ENCODE measurements at regions of chr12 and their contacts with region 1.

Region 1: DNA sequence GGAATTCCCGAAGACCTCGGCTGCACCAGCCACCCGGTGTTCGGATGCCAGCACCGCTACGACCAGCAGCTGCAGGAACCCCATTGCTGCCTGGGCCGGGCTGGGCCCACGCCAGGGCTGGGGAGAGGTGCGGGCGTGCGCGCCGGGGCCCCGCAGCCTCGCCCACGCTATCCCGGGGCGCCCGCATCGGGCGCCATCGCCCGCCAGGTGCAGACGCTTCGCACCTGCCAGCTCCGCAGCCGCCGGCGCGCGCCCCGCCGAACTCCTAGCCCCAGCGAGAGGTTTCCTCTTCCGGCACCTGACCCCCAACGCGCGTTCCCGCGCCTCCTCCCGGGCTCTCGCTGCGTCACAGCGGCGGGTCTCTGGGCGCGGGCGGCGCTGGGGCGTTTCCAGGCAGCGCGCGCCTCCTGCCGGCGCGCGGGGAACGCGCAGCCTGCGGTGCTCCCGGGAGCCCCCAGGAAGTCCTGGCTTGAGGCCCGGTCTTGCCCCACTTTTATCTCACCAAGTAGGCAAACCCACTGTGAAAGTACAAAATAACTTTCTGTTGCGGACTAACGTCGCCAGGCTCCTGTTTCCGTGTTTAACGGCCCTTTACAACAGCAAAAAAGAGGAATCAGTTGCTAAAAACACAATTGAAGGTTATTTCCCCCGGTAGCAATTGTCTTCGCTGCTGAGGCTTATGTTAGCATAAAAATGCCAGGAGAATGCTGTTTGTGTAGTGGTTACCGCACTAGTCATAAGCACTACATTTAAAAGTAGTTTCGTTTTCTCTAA is at the start of gene TM7SF3:
- DNase-seq: peak; percentile 91 to 99 (median 96)
- ATAC-seq: peak; percentile 82
- H3K4me3 ChIP-seq: peak within 1 kb of the TSS; percentile 89
- H3K4me3 Mint-ChIP-seq: peak within 1 kb of the TSS; percentile 93
- H3K27ac ChIP-seq: peak within 1 kb of the TSS; percentile 92 to 96
- H3K27ac Mint-ChIP-seq: peak within 1 kb of the TSS; percentile 97
- H3K4me1 ChIP-seq: peaks cover 25% of the 10 kb centered on the region
- H3K4me1 Mint-ChIP-seq: peaks cover 57% of the 10 kb centered on the region
- H3K27me3 ChIP-seq: no peaks in the 10 kb centered on the region
- H3K27me3 Mint-ChIP-seq: no peaks in the 10 kb centered on the region
- CTCF ChIP-seq: peak; percentile 99
- total RNA-seq, gene TM7SF3: 8.3 to 9.5 TPM

Region 2: GRCh38 chr12:26701604-26702215 is 312.6 kb before region 1 on chr12:
- CTCF ChIA-PET with region 1: no interaction called
- POLR2A ChIA-PET with region 1: no interaction called
- intact Hi-C with region 1: no loop called
- DNase-seq: peak in 3 of 14 experiments; percentile 40 to 48 (median 44)
- ATAC-seq: no peak
- H3K4me3 ChIP-seq: no peak overlapping the region
- H3K4me3 Mint-ChIP-seq: no peak overlapping the region
- H3K27ac ChIP-seq: no peak overlapping the region
- H3K27ac Mint-ChIP-seq: no peak overlapping the region
- H3K4me1 ChIP-seq: no peaks in the 10 kb centered on the region
- H3K4me1 Mint-ChIP-seq: no peaks in the 10 kb centered on the region
- H3K27me3 ChIP-seq: no peaks in the 10 kb centered on the region
- H3K27me3 Mint-ChIP-seq: no peaks in the 10 kb centered on the region
- CTCF ChIP-seq: peak; percentile 61

Region 3: GRCh38 chr12:26853303-26854030 is 160.8 kb before region 1 on chr12:
- CTCF ChIA-PET with region 1: no interaction called
- POLR2A ChIA-PET with region 1: interaction called, 4 read pairs
- intact Hi-C with region 1: loop called (anchors 1 to 2 kb)
- DNase-seq: peak; percentile 56 to 84 (median 63)
- ATAC-seq: peak; percentile 99
- H3K4me3 ChIP-seq: no peak overlapping the region
- H3K4me3 Mint-ChIP-seq: no peak overlapping the region
- H3K27ac ChIP-seq: no peak overlapping the region
- H3K27ac Mint-ChIP-seq: no peak overlapping the region
- H3K4me1 ChIP-seq: no peaks in the 10 kb centered on the region
- H3K4me1 Mint-ChIP-seq: no peaks in the 10 kb centered on the region
- H3K27me3 ChIP-seq: no peaks in the 10 kb centered on the region
- H3K27me3 Mint-ChIP-seq: peaks cover 4% of the 10 kb centered on the region
- CTCF ChIP-seq: peak; percentile 80

Region 4: DNA sequence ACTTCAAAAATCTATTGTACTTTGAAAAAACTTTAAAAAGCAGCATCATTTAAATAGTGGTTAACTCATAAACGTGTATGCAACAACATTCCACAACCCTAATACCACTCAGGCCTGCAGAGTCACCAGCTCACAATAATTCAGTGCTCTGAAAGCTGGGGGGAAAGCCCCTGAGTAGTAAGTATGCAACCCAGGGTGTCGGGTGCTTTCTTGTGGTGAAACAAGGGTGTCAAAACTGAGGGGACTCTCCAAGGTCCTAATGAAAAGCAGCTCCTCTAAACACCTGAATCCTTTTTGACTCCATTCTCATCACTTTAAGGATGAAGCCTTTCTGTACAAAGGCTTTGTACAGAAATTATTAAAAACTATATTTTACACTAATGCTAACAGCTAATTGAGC is 42.3 kb before region 1 on chr12:
- CTCF ChIA-PET with region 1: interaction called, 9 read pairs
- POLR2A ChIA-PET with region 1: interaction called, 7 read pairs
- intact Hi-C with region 1: loop called (anchors 5 kb)
- DNase-seq: peak; percentile 6 to 88 (median 40)
- ATAC-seq: peak; percentile 99
- H3K4me3 ChIP-seq: no peak overlapping the region
- H3K4me3 Mint-ChIP-seq: no peak overlapping the region
- H3K27ac ChIP-seq: peak overlapping the region in 1 of 2 donors; percentile 2
- H3K27ac Mint-ChIP-seq: peak overlapping the region; percentile 55
- H3K4me1 ChIP-seq: peaks cover 4% of the 10 kb centered on the region
- H3K4me1 Mint-ChIP-seq: peaks cover 23% of the 10 kb centered on the region
- H3K27me3 ChIP-seq: no peaks in the 10 kb centered on the region
- H3K27me3 Mint-ChIP-seq: no peaks in the 10 kb centered on the region
- CTCF ChIP-seq: no peak

Region 5: GRCh38 chr12:27083861-27084394 is 69.7 kb after region 1 on chr12:
- CTCF ChIA-PET with region 1: no interaction called
- POLR2A ChIA-PET with region 1: no interaction called
- intact Hi-C with region 1: no loop called
- DNase-seq: no peak
- ATAC-seq: no peak
- H3K4me3 ChIP-seq: no peak overlapping the region
- H3K4me3 Mint-ChIP-seq: no peak overlapping the region
- H3K27ac ChIP-seq: no peak overlapping the region
- H3K27ac Mint-ChIP-seq: no peak overlapping the region
- H3K4me1 ChIP-seq: no peaks in the 10 kb centered on the region
- H3K4me1 Mint-ChIP-seq: no peaks in the 10 kb centered on the region
- H3K27me3 ChIP-seq: no peaks in the 10 kb centered on the region
- H3K27me3 Mint-ChIP-seq: no peaks in the 10 kb centered on the region
- CTCF ChIP-seq: no peak

Region 6: DNA sequence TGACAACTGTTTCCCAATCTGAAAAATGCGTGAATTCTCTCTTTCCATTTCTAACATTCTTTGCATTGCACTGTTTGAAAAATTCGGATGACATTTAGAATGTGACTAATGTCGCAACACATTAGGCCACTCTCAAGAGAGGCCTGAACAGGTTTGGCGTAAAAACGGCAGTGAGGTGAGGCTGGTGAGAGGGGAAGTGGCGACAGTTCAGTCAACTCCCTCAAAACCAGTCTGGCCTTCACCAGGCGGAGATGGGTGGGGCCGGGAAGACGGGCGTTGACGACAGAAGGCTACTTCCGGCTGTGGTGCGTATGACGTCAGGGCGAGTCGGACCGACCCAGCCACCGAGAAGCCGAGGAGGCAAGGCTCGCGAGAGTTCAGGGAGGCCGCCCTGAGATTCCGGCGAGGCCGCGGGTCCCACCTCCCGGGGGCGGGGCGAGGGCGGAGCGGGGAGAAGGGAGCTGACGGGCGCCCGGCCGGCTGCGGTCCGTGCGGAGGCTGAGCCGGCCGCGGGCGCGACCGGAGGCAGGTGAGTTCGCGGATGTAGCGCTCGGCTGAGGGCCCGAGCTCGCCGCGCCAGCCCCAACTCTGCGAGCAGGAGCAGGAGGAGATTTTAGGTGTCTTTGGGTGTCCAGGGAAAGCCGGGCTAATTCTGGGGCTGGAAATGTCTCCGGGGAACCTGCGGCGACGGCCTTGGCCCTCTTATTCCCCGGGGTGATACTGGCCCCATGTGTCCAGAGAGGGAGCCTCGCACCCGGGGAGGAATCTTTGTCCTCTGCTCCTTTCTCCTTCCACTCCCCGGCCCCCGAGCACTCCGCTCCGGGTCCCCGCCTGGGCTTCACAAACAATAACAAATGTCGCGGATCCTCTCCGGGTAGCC is 229.8 kb after region 1 on chr12 and contains the start of gene STK38L:
- CTCF ChIA-PET with region 1: no interaction called
- POLR2A ChIA-PET with region 1: interaction called, 7 read pairs
- intact Hi-C with region 1: loop called in 1 of 2 experiments (anchors 10 kb)
- DNase-seq: peak; percentile 87 to 99 (median 94)
- ATAC-seq: peak; percentile 95
- H3K4me3 ChIP-seq: peak within 1 kb of the TSS; percentile 93
- H3K4me3 Mint-ChIP-seq: peak within 1 kb of the TSS; percentile 99
- H3K27ac ChIP-seq: peak within 1 kb of the TSS; percentile 60 to 77
- H3K27ac Mint-ChIP-seq: peak within 1 kb of the TSS; percentile 92
- H3K4me1 ChIP-seq: peaks cover 15% of the 10 kb centered on the region
- H3K4me1 Mint-ChIP-seq: peaks cover 64% of the 10 kb centered on the region
- H3K27me3 ChIP-seq: no peaks in the 10 kb centered on the region
- H3K27me3 Mint-ChIP-seq: no peaks in the 10 kb centered on the region
- CTCF ChIP-seq: no peak
- total RNA-seq, gene STK38L: 18.3 to 21.0 TPM